ENCODE measurements at regions of chr14 and their contacts with region 1.

Region 1: GRCh38 chr14:50773632-50774541 is 57.1 kb downstream of the NIN start:
- DNase-seq: no peak
- ATAC-seq: peak; percentile 67; the same call in 2 of the 3 replicates
- H3K4me3 ChIP-seq: no peak overlapping the region
- H3K27ac ChIP-seq: no peak overlapping the region
- H3K4me1 ChIP-seq: no peaks in the 10 kb centered on the region; the same call in 1 of the 2 replicates
- H3K27me3 ChIP-seq: no peaks in the 10 kb centered on the region
- CTCF ChIP-seq: peak; percentile 63 to 78 (median 76)
- EP300 ChIP-seq: no peak
- POLR2A ChIP-seq: no peak
- RAD21 ChIP-seq: peak; percentile 79

Region 2: DNA sequence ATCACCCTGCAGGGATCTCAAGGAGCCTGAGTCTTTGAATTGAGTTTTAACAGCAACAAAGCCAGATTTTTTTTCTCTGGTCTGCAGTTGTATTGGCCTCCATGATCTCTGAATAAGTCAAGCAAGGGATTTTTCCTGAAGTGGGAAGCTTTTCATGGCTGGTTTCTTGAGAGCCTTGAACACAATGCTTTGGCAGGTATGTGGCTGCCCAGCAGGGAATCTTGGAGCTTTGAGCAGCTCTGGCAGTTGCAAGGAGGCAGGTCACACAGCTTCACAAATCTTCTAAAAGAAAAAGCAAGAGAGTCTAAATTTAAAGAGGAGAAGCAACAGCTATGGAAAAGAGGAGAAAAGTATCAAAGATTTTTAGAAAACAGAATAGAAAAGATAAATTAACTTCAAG is 1247.8 kb before region 1 on chr14:
- CTCF ChIA-PET with region 1: no interaction called
- POLR2A ChIA-PET with region 1: no interaction called
- RAD21 ChIA-PET with region 1: no interaction called
- SMC1A ChIA-PET with region 1: no interaction called
- in situ Hi-C with region 1: no loop called
- intact Hi-C with region 1: no loop called
- DNase-seq: no peak
- ATAC-seq: no peak
- H3K4me3 ChIP-seq: no peak overlapping the region
- H3K27ac ChIP-seq: no peak overlapping the region
- H3K4me1 ChIP-seq: no peaks in the 10 kb centered on the region
- H3K27me3 ChIP-seq: 0 out of 4 replicates have a peak, but pooled peaks cover 0 to 2% of the 10 kb centered on the region in 2 experiments
- CTCF ChIP-seq: no peak
- EP300 ChIP-seq: no peak
- POLR2A ChIP-seq: no peak
- RAD21 ChIP-seq: no peak

Region 3: GRCh38 chr14:50542941-50543418 is 230.9 kb before region 1 on chr14:
- CTCF ChIA-PET with region 1: interaction called, 23 read pairs
- POLR2A ChIA-PET with region 1: no interaction called
- RAD21 ChIA-PET with region 1: interaction called, 5 read pairs
- SMC1A ChIA-PET with region 1: interaction called, 38 read pairs
- in situ Hi-C with region 1: loop called (anchors 5 kb)
- intact Hi-C with region 1: loop called (anchors 2 kb)
- DNase-seq: no peak
- ATAC-seq: peak; percentile 94
- H3K4me3 ChIP-seq: no peak overlapping the region
- H3K27ac ChIP-seq: no peak overlapping the region
- H3K4me1 ChIP-seq: peaks cover 3% of the 10 kb centered on the region; the same call in 1 of the 2 replicates
- H3K27me3 ChIP-seq: no peaks in the 10 kb centered on the region
- CTCF ChIP-seq: peak; percentile 47 to 59 (median 52)
- EP300 ChIP-seq: no peak
- POLR2A ChIP-seq: no peak
- RAD21 ChIP-seq: peak; percentile 52

Region 4: GRCh38 chr14:50619556-50620141 is 154.2 kb before region 1 on chr14:
- CTCF ChIA-PET with region 1: interaction called, 134 read pairs
- POLR2A ChIA-PET with region 1: no interaction called
- RAD21 ChIA-PET with region 1: interaction called, 75 read pairs
- SMC1A ChIA-PET with region 1: interaction called, 74 read pairs
- in situ Hi-C with region 1: no loop called
- intact Hi-C with region 1: loop called (anchors 5 kb)
- DNase-seq: peak; percentile 21
- ATAC-seq: peak; percentile 92
- H3K4me3 ChIP-seq: no peak overlapping the region
- H3K27ac ChIP-seq: no peak overlapping the region
- H3K4me1 ChIP-seq: no peaks in the 10 kb centered on the region
- H3K27me3 ChIP-seq: no peaks in the 10 kb centered on the region
- CTCF ChIP-seq: peak; percentile 69 to 80 (median 76)
- EP300 ChIP-seq: no peak
- POLR2A ChIP-seq: no peak
- RAD21 ChIP-seq: peak; percentile 83

Region 5: DNA sequence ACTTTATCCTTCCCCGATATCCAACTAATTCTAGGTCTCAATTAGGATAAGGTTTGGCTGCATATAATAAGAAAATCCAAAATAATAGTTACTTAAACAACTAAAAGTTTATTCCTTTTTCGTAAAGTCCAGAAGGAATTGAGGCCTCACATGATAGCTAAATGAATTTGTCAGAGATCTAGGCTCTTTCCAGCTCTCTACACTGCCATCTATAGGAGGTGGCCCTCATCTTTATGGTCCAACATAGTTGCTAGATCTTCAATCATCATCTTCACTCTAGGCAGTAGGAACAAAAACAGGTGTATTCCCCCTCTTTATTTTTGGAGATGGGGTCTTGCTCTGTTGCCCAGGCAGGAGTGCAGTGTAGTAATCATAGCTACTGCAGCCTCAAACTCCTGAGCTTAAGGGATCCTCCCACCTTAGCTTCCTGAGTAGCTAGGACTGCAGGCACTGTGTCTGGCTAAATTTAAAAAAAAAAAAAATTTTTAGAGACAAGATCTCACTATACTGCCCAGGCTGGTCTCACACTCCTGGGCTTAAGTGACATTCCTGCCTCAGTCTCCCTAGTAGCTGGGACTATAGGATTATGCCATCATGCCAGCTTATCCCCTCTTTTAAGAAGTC is 59.3 kb before region 1 on chr14:
- CTCF ChIA-PET with region 1: interaction called, 57 read pairs
- POLR2A ChIA-PET with region 1: no interaction called
- RAD21 ChIA-PET with region 1: interaction called, 28 read pairs
- SMC1A ChIA-PET with region 1: interaction called, 26 read pairs
- in situ Hi-C with region 1: no loop called
- intact Hi-C with region 1: no loop called
- DNase-seq: no peak
- ATAC-seq: peak; percentile 85
- H3K4me3 ChIP-seq: no peak overlapping the region
- H3K27ac ChIP-seq: no peak overlapping the region
- H3K4me1 ChIP-seq: no peaks in the 10 kb centered on the region
- H3K27me3 ChIP-seq: no peaks in the 10 kb centered on the region
- CTCF ChIP-seq: peak; percentile 50 to 54 (median 52); a peak in 5 of 6 replicates
- EP300 ChIP-seq: no peak
- POLR2A ChIP-seq: no peak
- RAD21 ChIP-seq: peak; percentile 64

Region 6: GRCh38 chr14:50750323-50750722 is 23.6 kb before region 1 on chr14:
- CTCF ChIA-PET with region 1: interaction called, 24 read pairs
- POLR2A ChIA-PET with region 1: no interaction called
- RAD21 ChIA-PET with region 1: interaction called, 4 read pairs
- SMC1A ChIA-PET with region 1: interaction called, 6 read pairs
- in situ Hi-C with region 1: no loop called
- intact Hi-C with region 1: no loop called
- DNase-seq: no peak
- ATAC-seq: no peak
- H3K4me3 ChIP-seq: no peak overlapping the region
- H3K27ac ChIP-seq: no peak overlapping the region
- H3K4me1 ChIP-seq: no peaks in the 10 kb centered on the region
- H3K27me3 ChIP-seq: no peaks in the 10 kb centered on the region
- CTCF ChIP-seq: no peak
- EP300 ChIP-seq: no peak
- POLR2A ChIP-seq: no peak
- RAD21 ChIP-seq: no peak

Region 7: GRCh38 chr14:50785457-50786063 is 11.7 kb after region 1 on chr14:
- CTCF ChIA-PET with region 1: interaction called, 183 read pairs
- POLR2A ChIA-PET with region 1: no interaction called
- RAD21 ChIA-PET with region 1: interaction called, 39 read pairs
- SMC1A ChIA-PET with region 1: interaction called, 60 read pairs
- in situ Hi-C with region 1: no loop called
- intact Hi-C with region 1: no loop called
- DNase-seq: no peak
- ATAC-seq: no peak
- H3K4me3 ChIP-seq: no peak overlapping the region
- H3K27ac ChIP-seq: peak overlapping the region; percentile 5
- H3K4me1 ChIP-seq: peaks cover 59% of the 10 kb centered on the region
- H3K27me3 ChIP-seq: no peaks in the 10 kb centered on the region
- CTCF ChIP-seq: no peak
- EP300 ChIP-seq: no peak
- POLR2A ChIP-seq: no peak
- RAD21 ChIP-seq: no peak

Region 8: GRCh38 chr14:50830932-50831725 is 57.2 kb after region 1 on chr14 and contains the start of gene NIN:
- CTCF ChIA-PET with region 1: interaction called, 15 read pairs
- POLR2A ChIA-PET with region 1: no interaction called
- RAD21 ChIA-PET with region 1: interaction called, 21 read pairs
- SMC1A ChIA-PET with region 1: interaction called, 12 read pairs
- in situ Hi-C with region 1: no loop called
- intact Hi-C with region 1: no loop called
- DNase-seq: no peak
- ATAC-seq: peak; percentile 89
- H3K4me3 ChIP-seq: peak within 1 kb of the TSS; percentile 96
- H3K27ac ChIP-seq: peak within 1 kb of the TSS; percentile 87
- H3K4me1 ChIP-seq: peaks cover 26% of the 10 kb centered on the region
- H3K27me3 ChIP-seq: no peaks in the 10 kb centered on the region
- CTCF ChIP-seq: no peak
- EP300 ChIP-seq: no peak
- POLR2A ChIP-seq: peak; percentile 72
- RAD21 ChIP-seq: no peak
- polyA plus RNA-seq, gene NIN: 16.2 to 17.0 TPM

Measured in GM12878 (cell line).